HepG2 (cell line): ENCODE measurements at regions of chr20 and their contacts with region 1.

Region 1: GRCh38 chr20:25584905-25585704 is at the start of gene NINL:
- DNase-seq: peak; percentile 82
- ATAC-seq: peak; percentile 89
- H3K4me3 ChIP-seq: peak within 1 kb of the TSS; percentile 74 to 83 (median 80)
- H3K27ac ChIP-seq: peak within 1 kb of the TSS; percentile 84
- H3K4me1 ChIP-seq: peaks cover 59% of the 10 kb centered on the region
- H3K27me3 ChIP-seq: no peaks in the 10 kb centered on the region; a peak in 1 of 5 replicates
- CTCF ChIP-seq: peak; percentile 19; the same call in 1 of the 2 replicates
- EP300 ChIP-seq: no peak; a peak in 1 of 4 replicates
- POLR2A ChIP-seq: peak; percentile 58 to 96
- RAD21 ChIP-seq: peak; percentile 74
- total RNA-seq, gene NINL: 23.3 and 34.3 TPM in 2 replicates

Region 2: DNA sequence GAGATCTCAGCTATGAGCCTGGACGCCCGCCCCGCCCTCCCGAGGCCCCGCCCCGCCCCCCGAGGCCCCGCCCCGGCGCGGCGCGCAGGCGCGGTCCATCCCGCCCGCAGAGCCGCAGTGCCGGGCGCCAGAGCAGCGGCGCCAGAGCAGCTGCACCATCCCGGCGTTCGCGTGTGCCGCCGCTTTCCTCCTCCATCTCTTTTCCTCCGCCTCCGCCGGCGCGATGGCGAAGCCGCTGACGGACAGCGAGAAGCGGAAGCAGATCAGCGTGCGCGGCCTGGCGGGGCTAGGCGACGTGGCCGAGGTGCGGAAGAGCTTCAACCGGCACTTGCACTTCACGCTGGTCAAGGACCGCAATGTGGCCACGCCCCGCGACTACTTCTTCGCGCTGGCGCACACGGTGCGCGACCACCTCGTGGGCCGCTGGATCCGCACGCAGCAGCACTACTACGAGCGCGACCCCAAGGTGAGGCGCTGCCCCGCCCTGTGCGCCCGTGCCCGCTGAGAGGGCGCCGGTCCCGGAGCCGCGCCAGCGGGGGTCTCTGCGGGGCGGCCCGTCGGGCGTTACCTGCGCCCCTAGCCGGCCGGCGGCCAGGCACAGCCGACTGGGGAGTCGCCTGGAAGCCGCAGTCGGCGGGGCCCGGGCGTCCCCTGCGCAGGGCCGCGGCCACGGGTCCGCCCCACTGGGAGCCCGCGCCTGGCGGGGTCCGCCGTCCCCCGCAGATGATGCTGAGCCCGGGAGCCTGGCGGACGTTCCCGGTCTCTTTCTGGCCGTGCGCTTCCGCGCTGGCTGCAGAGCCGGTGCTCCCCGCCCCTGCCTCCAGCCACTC is 336.9 kb before region 1 on chr20 and contains the start of gene PYGB:
- CTCF ChIA-PET with region 1: no interaction called
- POLR2A ChIA-PET with region 1: interaction called, 10 read pairs
- in situ Hi-C with region 1: no loop called
- intact Hi-C with region 1: no loop called
- DNase-seq: peak; percentile 78
- ATAC-seq: peak; percentile 77
- H3K4me3 ChIP-seq: peak within 1 kb of the TSS; percentile 69 to 93 (median 93)
- H3K27ac ChIP-seq: peak within 1 kb of the TSS; percentile 75
- H3K4me1 ChIP-seq: peaks cover 55% of the 10 kb centered on the region
- H3K27me3 ChIP-seq: peaks cover 1 to 15% of the 10 kb centered on the region in 2 experiments; a peak in 2 of 5 replicates
- CTCF ChIP-seq: peak; percentile 39; the same call in 1 of the 2 replicates
- EP300 ChIP-seq: 0 out of 4 replicates have a peak, but pooled peaks of 1 of the 2 experiments have one; percentile 45
- POLR2A ChIP-seq: peak; percentile 95 to 100
- RAD21 ChIP-seq: peak; percentile 59
- total RNA-seq, gene PYGB: 82.0 and 86.3 TPM in 2 replicates

Region 3: GRCh38 chr20:25418776-25419175 is 166.3 kb before region 1 on chr20:
- CTCF ChIA-PET with region 1: no interaction called
- POLR2A ChIA-PET with region 1: no interaction called
- in situ Hi-C with region 1: no loop called
- intact Hi-C with region 1: no loop called
- DNase-seq: no peak
- ATAC-seq: no peak
- H3K4me3 ChIP-seq: no peak overlapping the region
- H3K27ac ChIP-seq: no peak overlapping the region
- H3K4me1 ChIP-seq: no peaks in the 10 kb centered on the region
- H3K27me3 ChIP-seq: no peaks in the 10 kb centered on the region
- CTCF ChIP-seq: no peak
- EP300 ChIP-seq: no peak
- POLR2A ChIP-seq: no peak
- RAD21 ChIP-seq: no peak

Region 4: DNA sequence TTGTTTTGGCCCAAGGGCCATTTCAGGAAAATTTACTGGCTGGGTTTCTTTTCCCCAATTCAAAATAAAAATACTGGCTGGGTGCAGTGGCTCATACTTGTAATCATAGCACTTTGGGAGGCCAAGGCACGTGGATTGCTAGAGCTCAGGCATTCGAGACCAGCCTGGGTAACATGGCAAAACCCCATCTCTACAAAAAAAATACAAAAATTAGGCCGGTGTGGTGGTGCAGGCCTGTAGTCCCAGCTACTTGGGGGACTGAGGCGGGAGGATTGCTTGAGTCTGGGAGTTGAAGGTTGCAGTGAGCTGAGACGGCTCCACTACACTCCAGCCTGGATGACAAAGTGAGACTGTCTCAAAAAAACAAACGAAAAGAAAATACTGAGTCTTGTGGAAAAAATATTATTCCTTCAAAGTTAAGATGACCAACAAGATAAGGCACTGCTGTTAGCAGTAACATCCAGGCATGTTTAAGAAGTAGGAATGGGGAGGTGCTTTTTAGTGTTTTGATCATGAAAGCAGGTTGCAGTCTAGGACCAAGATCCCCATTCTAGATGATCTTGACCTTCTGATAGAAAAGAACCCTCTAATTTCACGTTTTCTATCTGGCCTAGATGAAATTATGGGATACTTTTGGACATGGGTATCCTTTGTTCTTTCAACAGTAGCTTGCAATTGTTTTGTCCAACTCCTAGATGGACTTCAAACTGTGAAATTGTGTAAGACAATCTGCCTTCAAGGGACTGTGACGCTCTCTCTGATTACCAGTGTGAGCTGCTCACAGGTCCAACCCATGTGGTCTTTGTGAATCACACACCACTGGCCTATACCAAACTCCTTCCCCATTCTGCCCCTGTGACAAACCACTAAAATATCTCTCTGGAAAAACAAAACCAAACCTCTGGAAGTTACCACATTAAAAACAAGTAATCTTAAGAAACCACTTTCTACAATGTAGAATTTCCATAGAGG is 59.5 kb before region 1 on chr20:
- CTCF ChIA-PET with region 1: no interaction called
- POLR2A ChIA-PET with region 1: interaction called, 25 read pairs
- in situ Hi-C with region 1: no loop called
- intact Hi-C with region 1: no loop called
- DNase-seq: peak; percentile 97
- ATAC-seq: peak; percentile 98
- H3K4me3 ChIP-seq: no peak overlapping the region
- H3K27ac ChIP-seq: peak overlapping the region; percentile 50
- H3K4me1 ChIP-seq: peaks cover 44% of the 10 kb centered on the region
- H3K27me3 ChIP-seq: no peaks in the 10 kb centered on the region
- CTCF ChIP-seq: no peak
- EP300 ChIP-seq: peak; percentile 29 to 76; a peak in 2 of 4 replicates
- POLR2A ChIP-seq: no peak
- RAD21 ChIP-seq: 0 out of 2 replicates have a peak, but pooled peaks have one; percentile 8

Region 5: DNA sequence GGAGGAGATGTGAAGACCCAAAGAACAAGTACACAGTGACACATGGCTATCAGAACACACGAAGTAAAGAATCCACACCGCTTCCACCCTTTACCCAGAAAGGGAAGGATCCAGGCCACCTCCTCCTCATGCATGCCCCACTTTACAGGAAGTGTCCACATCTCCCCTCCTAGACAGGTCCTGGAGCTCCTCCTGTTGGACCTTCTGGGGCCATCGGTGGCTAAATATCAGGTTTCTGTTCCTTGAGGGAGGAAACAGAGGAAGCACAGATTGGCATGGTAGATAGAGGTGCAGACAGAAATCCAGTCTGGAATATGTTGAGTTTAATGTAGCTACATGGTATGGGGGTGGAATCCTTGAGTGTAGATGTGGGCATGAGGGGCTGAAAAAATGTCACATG is 10.7 kb before region 1 on chr20:
- CTCF ChIA-PET with region 1: no interaction called
- POLR2A ChIA-PET with region 1: interaction called, 24 read pairs
- in situ Hi-C with region 1: no loop called
- intact Hi-C with region 1: no loop called
- DNase-seq: peak; percentile 63
- ATAC-seq: peak; percentile 22
- H3K4me3 ChIP-seq: no peak overlapping the region
- H3K27ac ChIP-seq: no peak overlapping the region
- H3K4me1 ChIP-seq: peaks cover 66% of the 10 kb centered on the region
- H3K27me3 ChIP-seq: no peaks in the 10 kb centered on the region
- CTCF ChIP-seq: peak; percentile 80
- EP300 ChIP-seq: no peak
- POLR2A ChIP-seq: no peak
- RAD21 ChIP-seq: peak; percentile 59; the same call in 1 of the 2 replicates

Region 6: GRCh38 chr20:25644808-25645207 is 59.7 kb after region 1 on chr20:
- CTCF ChIA-PET with region 1: no interaction called
- POLR2A ChIA-PET with region 1: no interaction called
- in situ Hi-C with region 1: no loop called
- intact Hi-C with region 1: no loop called
- DNase-seq: no peak
- ATAC-seq: no peak
- H3K4me3 ChIP-seq: no peak overlapping the region
- H3K27ac ChIP-seq: no peak overlapping the region
- H3K4me1 ChIP-seq: no peaks in the 10 kb centered on the region
- H3K27me3 ChIP-seq: no peaks in the 10 kb centered on the region
- CTCF ChIP-seq: no peak
- EP300 ChIP-seq: no peak
- POLR2A ChIP-seq: no peak
- RAD21 ChIP-seq: no peak

Region 7: DNA sequence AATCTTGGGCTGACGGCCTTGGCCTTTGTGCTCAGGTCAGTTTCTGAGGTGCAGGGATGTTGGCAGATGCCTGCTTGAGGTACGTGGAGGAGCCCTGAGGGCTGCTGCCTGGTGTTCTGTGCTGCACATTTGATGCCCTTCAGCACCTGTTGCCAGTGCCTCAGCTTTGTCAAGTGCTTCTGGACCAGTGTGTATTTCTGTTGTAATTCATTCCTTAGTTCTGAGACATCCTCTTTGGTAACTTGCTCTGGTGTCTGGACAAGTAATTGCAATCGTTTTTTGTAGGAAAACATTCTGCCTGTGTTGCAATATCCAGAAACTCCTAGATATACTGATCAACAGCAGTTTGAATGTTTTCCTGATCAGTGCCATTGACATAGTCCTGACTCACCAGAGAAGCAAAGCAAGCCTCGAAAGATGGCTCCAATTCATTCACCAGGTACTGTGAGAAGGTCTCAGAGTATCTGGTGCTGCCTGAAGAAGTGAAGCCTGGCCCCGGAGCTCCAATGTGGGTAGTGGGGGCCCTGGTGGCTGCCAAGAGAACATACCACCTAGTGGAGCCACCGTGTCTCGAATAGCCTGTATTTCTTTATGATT is 84.8 kb after region 1 on chr20:
- CTCF ChIA-PET with region 1: no interaction called
- POLR2A ChIA-PET with region 1: no interaction called
- in situ Hi-C with region 1: loop called (anchors 10 kb)
- intact Hi-C with region 1: no loop called
- DNase-seq: peak; percentile 61
- ATAC-seq: peak; percentile 91
- H3K4me3 ChIP-seq: no peak overlapping the region
- H3K27ac ChIP-seq: peak overlapping the region; percentile 0
- H3K4me1 ChIP-seq: peaks cover 26% of the 10 kb centered on the region
- H3K27me3 ChIP-seq: no peaks in the 10 kb centered on the region
- CTCF ChIP-seq: peak; percentile 25; the same call in 1 of the 2 replicates
- EP300 ChIP-seq: peak in 1 of 2 experiments; percentile 9; a peak in 1 of 4 replicates
- POLR2A ChIP-seq: no peak
- RAD21 ChIP-seq: peak; percentile 42; the same call in 1 of the 2 replicates

Region 8: DNA sequence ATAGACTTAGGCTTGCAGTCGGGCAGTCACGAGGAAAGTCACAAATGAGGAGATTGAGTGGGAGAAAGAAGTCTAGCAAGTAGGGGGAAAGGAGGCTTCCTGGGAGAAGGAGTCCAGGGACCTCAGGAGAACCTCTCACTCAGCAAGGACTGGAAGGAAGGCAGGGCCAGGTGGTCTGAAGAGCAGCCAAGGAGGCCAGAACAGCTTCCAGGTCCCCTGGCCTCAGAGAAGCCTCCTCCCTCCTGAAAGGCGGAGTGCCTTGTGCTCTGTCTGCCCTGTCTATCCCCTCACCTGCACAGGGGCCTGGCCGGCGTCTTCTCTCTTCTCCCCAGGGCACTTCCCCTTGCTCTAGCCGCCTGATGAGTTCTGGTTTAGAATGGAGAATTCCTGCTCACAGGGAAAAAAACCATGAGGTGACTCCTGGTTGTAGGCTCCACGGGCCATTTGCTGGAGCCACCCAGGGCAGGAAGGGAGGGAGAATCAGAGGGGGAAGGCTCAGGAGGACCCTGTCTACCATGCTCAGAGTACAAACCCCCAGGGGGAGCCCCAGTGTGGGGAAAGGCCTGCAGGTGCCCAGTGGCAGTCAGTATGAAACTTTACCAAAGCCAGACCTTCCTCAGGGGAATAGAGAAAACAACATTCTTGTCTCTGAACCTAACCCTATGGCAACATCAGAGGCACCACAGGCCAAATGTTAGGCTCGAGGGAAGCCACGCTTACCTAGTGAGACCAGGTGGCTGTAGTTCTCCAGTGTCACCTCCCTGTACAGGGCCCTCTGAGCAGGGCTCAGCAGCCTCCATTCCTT is 100.4 kb after region 1 on chr20:
- CTCF ChIA-PET with region 1: no interaction called
- POLR2A ChIA-PET with region 1: no interaction called
- in situ Hi-C with region 1: no loop called
- intact Hi-C with region 1: no loop called
- DNase-seq: no peak
- ATAC-seq: peak; percentile 85
- H3K4me3 ChIP-seq: no peak overlapping the region
- H3K27ac ChIP-seq: no peak overlapping the region
- H3K4me1 ChIP-seq: no peaks in the 10 kb centered on the region
- H3K27me3 ChIP-seq: no peaks in the 10 kb centered on the region
- CTCF ChIP-seq: no peak
- EP300 ChIP-seq: no peak
- POLR2A ChIP-seq: no peak
- RAD21 ChIP-seq: no peak